ENCODE measurements at regions of chr1 and their contacts with region 1.

Region 1: DNA sequence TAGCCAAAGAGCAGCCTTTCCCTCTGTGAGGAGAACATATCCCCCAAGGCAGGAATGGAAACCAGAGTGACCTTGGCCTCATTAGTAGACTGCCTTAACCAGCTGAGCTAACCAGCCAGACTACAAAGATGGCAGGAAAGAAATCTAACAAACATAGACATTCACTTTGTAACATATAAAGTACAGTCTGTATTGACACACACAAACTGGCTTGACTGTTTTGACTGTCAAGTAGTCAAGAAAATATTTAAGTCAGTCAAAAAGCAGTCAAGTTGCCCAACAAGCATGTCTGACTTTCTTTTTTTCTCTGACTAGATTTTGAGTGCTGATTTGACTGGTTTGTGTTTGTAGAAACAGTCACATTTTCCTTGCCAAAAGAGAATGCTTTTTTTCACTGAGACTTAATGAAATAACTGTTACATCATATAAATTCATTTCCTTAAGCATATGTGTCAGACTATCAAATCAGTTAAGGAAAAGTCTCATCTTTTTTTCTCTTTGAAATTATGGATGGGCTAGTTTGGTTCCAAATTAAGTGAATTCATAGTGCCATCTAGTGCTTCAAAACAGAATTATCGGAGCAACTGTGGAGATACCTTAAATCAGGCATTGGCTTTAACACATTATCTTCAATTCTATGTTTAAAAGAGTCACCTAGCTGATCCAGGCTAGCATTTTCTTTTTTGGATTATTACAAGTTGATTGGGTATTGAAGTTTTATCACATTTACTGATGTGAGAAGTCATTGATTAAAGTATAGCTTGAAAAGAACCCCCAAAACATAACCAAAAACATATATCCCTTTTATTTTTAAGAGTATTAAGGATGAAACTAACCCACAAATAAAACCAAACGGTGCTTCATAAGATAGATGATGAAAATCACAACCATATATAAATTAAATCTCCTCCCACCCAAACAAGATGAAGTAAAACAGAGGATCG is 75.0 kb downstream of the ATP6V1G3 start:
- DNase-seq: no peak
- ATAC-seq: peak; percentile 71
- H3K4me3 ChIP-seq: no peak overlapping the region
- H3K27ac ChIP-seq: no peak overlapping the region
- H3K4me1 ChIP-seq: no peaks in the 10 kb centered on the region
- H3K27me3 ChIP-seq: no peaks in the 10 kb centered on the region
- CTCF ChIP-seq: peak; percentile 44 to 76 (median 67)
- POLR2A ChIP-seq: no peak
- RAD21 ChIP-seq: peak; percentile 85

Region 2: DNA sequence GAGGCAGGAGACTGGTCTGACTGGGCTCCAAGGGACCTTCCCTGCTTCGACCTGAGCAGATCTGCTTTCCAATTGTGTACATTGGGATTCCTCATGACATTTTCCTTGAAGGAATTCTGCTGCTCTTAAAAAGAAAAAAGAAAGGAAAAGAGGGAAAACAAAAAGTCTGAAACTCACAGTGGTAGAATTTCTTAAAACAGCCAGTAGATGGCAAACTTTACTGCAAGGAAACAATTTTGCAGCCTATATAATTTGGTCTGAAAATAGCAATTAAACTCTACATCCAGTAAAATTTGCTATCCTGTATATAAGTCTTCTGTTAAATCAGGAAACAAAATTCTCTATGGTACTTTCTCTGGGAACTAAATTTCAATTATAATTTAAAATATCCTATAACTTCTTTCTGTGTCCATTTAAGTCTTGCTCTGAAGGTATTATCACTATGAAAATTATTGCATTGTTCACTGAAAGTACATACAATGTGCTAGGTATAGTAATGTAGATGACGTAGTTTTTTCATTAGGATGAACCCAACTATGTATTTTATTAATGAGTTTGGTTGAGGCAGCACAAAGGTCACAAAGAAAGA is 1137.6 kb before region 1 on chr1:
- CTCF ChIA-PET with region 1: no interaction called
- POLR2A ChIA-PET with region 1: no interaction called
- RAD21 ChIA-PET with region 1: no interaction called
- intact Hi-C with region 1: loop called (anchors 5 kb)
- DNase-seq: no peak
- ATAC-seq: peak; percentile 53; the same call in 1 of the 2 replicates
- H3K4me3 ChIP-seq: no peak overlapping the region
- H3K27ac ChIP-seq: no peak overlapping the region
- H3K4me1 ChIP-seq: no peaks in the 10 kb centered on the region
- H3K27me3 ChIP-seq: no peaks in the 10 kb centered on the region
- CTCF ChIP-seq: peak; percentile 33 to 66 (median 55); a peak in 5 of 6 replicates
- POLR2A ChIP-seq: no peak
- RAD21 ChIP-seq: peak; percentile 58

Region 3: DNA sequence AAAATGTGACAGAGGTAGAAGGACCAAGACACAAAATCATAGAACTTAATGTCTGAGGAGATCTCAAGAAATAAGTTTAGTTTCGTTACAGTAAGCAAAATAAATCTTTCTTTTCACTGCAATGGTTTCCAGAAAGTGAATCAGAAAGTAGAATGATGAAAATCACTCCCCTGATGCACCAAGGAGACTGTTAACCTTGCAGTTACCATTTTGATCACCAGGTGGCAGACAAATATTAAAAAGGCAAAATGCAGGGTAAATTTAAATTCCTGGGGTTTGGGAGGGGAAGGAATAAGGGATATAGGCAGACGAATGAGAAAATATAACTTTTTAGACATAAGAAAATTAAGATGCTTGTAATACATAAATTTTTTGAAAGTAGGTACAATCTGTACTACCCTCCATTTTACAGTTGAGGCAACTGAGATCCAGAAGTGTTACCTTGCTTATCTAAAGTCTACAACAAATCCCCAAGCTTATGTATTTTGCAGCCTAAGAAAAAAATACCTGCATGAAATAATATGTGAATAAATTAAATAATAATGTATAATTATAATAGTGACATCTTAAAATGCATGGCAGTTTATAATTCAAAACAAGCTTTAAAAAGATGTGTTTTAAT is 944.2 kb before region 1 on chr1:
- CTCF ChIA-PET with region 1: interaction called, 3 read pairs
- POLR2A ChIA-PET with region 1: no interaction called
- RAD21 ChIA-PET with region 1: no interaction called
- intact Hi-C with region 1: loop called (anchors 2 kb)
- DNase-seq: peak; percentile 16
- ATAC-seq: peak; percentile 60; the same call in 1 of the 2 replicates
- H3K4me3 ChIP-seq: no peak overlapping the region
- H3K27ac ChIP-seq: no peak overlapping the region
- H3K4me1 ChIP-seq: no peaks in the 10 kb centered on the region
- H3K27me3 ChIP-seq: no peaks in the 10 kb centered on the region
- CTCF ChIP-seq: peak; percentile 45 to 77 (median 63); a peak in 5 of 6 replicates
- POLR2A ChIP-seq: no peak
- RAD21 ChIP-seq: peak; percentile 61

Region 4: GRCh38 chr1:197924516-197925123 is 540.9 kb before region 1 on chr1:
- CTCF ChIA-PET with region 1: no interaction called
- POLR2A ChIA-PET with region 1: no interaction called
- RAD21 ChIA-PET with region 1: no interaction called
- intact Hi-C with region 1: loop called (anchors 10 kb)
- DNase-seq: peak; percentile 51
- ATAC-seq: peak; percentile 96
- H3K4me3 ChIP-seq: no peak overlapping the region
- H3K27ac ChIP-seq: no peak overlapping the region
- H3K4me1 ChIP-seq: no peaks in the 10 kb centered on the region
- H3K27me3 ChIP-seq: no peaks in the 10 kb centered on the region
- CTCF ChIP-seq: peak; percentile 77 to 88 (median 84)
- POLR2A ChIP-seq: no peak
- RAD21 ChIP-seq: peak; percentile 86

Region 5: DNA sequence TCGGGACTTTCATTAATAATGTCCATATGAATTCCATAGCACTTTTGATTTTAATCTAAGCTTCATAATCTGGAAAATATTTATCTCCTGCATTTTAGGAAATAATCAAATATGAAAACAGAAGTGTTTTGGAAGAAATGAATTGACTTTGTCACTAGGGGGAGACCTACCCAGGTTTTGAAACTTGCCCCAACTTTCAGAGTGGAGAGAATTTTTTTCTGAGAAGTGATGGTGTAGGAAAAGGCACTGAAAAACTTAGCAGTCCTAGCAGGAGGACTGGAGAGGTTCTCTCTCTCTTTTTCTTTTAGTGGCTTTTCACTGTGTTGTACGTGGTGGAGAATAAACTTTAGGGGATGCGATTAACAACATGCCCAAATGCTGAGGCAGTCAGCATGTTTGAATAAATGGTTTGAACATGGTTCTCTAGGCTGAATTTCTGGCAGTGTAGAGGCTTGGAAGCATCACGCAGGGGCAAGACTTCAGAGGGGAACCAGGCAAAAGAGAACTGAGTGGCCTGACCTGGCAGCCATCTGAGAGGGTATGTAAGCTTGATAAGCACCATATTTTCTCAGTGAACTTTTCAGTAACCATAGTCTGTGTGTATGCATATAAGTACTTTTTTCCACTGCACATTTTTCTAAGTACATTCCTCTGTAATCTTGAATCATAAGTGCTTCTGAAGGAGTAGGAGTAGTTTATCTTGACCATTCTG is 377.0 kb before region 1 on chr1:
- CTCF ChIA-PET with region 1: interaction called, 8 read pairs
- POLR2A ChIA-PET with region 1: no interaction called
- RAD21 ChIA-PET with region 1: no interaction called
- intact Hi-C with region 1: loop called (anchors 1 kb)
- DNase-seq: peak; percentile 28
- ATAC-seq: peak; percentile 78
- H3K4me3 ChIP-seq: no peak overlapping the region
- H3K27ac ChIP-seq: no peak overlapping the region
- H3K4me1 ChIP-seq: no peaks in the 10 kb centered on the region
- H3K27me3 ChIP-seq: no peaks in the 10 kb centered on the region
- CTCF ChIP-seq: peak; percentile 60 to 73 (median 63); a peak in 5 of 6 replicates
- POLR2A ChIP-seq: no peak
- RAD21 ChIP-seq: peak; percentile 73

Region 6: DNA sequence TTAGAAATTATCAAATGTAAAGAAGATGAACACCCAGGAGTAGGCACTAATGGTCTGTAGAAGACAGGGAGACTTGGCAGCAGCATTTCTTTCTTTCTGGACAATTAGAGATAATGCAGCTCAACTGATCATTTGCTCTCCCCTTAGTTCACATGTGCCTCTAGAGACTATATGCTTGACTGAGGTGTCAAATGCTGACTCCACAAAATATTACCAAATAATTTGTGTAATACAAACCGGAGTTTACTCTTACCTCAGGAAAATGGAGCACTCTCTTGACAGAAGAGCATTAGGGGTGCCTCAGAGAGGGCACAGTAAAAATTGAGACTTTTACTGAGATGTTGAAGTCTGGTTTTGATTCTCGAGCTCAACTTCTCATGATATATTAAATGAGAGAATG is 56.8 kb before region 1 on chr1:
- CTCF ChIA-PET with region 1: no interaction called
- POLR2A ChIA-PET with region 1: no interaction called
- RAD21 ChIA-PET with region 1: no interaction called
- intact Hi-C with region 1: no loop called
- DNase-seq: no peak
- ATAC-seq: no peak
- H3K4me3 ChIP-seq: no peak overlapping the region
- H3K27ac ChIP-seq: no peak overlapping the region
- H3K4me1 ChIP-seq: no peaks in the 10 kb centered on the region
- H3K27me3 ChIP-seq: no peaks in the 10 kb centered on the region
- CTCF ChIP-seq: no peak
- POLR2A ChIP-seq: no peak
- RAD21 ChIP-seq: no peak

Region 7: GRCh38 chr1:198681831-198682759 is 216.6 kb after region 1 on chr1:
- CTCF ChIA-PET with region 1: interaction called, 5 read pairs
- POLR2A ChIA-PET with region 1: no interaction called
- RAD21 ChIA-PET with region 1: interaction called in 1 of 2 experiments, 3 read pairs
- intact Hi-C with region 1: loop called (anchors 5 kb)
- DNase-seq: no peak
- ATAC-seq: no peak
- H3K4me3 ChIP-seq: no peak overlapping the region
- H3K27ac ChIP-seq: no peak overlapping the region
- H3K4me1 ChIP-seq: no peaks in the 10 kb centered on the region
- H3K27me3 ChIP-seq: no peaks in the 10 kb centered on the region
- CTCF ChIP-seq: no peak
- POLR2A ChIP-seq: no peak
- RAD21 ChIP-seq: no peak

Region 8: DNA sequence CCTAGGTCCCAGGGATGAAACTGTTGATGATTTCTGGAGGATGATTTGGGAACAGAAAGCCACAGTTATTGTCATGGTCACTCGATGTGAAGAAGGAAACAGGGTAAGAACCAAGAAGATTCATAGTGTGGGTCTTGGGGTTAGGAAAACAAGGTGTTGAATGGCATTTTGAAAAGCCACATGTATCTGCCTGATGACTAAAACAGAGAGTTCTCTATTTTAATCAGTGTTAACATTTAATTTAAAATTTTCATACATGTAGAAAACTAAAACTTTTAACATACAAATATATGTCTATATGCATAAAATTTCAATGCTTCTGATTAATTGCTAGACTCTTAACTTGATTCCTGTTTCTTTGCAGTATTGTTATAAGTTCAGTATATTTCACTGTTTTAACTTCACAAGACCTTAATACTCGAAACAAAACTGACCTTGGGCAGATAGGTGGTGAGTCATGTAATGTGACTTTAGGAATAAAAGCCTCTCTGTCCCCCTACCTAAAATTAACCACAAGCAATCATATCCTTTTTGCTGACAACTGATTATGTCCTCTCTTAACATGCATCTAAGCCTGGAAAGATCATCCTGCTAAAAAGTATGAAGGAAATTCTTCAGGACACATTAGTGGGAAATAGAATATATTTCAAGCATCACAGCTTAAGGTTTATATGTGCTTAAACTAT is 269.0 kb after region 1 on chr1:
- CTCF ChIA-PET with region 1: no interaction called
- POLR2A ChIA-PET with region 1: no interaction called
- RAD21 ChIA-PET with region 1: no interaction called
- intact Hi-C with region 1: no loop called
- DNase-seq: no peak
- ATAC-seq: no peak
- H3K4me3 ChIP-seq: no peak overlapping the region
- H3K27ac ChIP-seq: no peak overlapping the region
- H3K4me1 ChIP-seq: peaks cover 0 to 4% of the 10 kb centered on the region in 2 experiments; a peak in 2 of 4 replicates
- H3K27me3 ChIP-seq: no peaks in the 10 kb centered on the region
- CTCF ChIP-seq: no peak
- POLR2A ChIP-seq: no peak
- RAD21 ChIP-seq: no peak

Region 9: DNA sequence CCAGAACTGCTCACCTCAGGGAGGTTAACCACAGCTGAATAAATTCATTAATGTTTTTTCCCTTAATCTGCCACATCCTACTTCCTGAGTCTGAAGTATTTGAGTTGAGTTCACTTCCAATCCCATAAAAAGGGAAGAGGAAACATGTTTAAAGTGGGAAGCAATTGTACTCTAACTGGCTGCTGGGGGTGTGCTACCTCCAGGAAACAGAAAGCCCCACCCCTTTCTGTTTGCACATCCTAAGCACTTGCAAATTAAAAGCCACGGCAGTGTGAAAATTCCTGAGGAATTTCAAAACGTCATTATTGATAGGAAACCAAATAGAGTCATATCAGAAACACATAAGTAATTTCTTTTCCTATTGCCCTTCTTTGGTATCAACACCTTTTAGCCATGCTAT is 1255.0 kb after region 1 on chr1:
- CTCF ChIA-PET with region 1: no interaction called
- POLR2A ChIA-PET with region 1: no interaction called
- RAD21 ChIA-PET with region 1: no interaction called
- intact Hi-C with region 1: no loop called
- DNase-seq: no peak
- ATAC-seq: no peak
- H3K4me3 ChIP-seq: no peak overlapping the region
- H3K27ac ChIP-seq: no peak overlapping the region
- H3K4me1 ChIP-seq: no peaks in the 10 kb centered on the region
- H3K27me3 ChIP-seq: no peaks in the 10 kb centered on the region
- CTCF ChIP-seq: no peak
- POLR2A ChIP-seq: no peak
- RAD21 ChIP-seq: no peak